Activated CD4-positive, alpha-beta memory T cell treated with anti-CD3 and anti-CD28 coated beads for 36 hours (primary cell): ENCODE measurements at regions of chr2 and their contacts with region 1.

Region 1: GRCh38 chr2:63588385-63589147 is at the starts of genes MDH1 and WDPCP:
- DNase-seq: peak; percentile 97
- H3K4me3 Mint-ChIP-seq: peak within 1 kb of the TSS; percentile 99
- H3K27ac Mint-ChIP-seq: peak within 1 kb of the TSS; percentile 92
- H3K4me1 Mint-ChIP-seq: peaks cover 35% of the 10 kb centered on the region
- H3K27me3 Mint-ChIP-seq: no peaks in the 10 kb centered on the region
- total RNA-seq, gene MDH1: 261 to 268 TPM
- total RNA-seq, gene WDPCP: 4.4 to 5.0 TPM

Region 2: GRCh38 chr2:62195421-62196277 is 1392.9 kb before region 1 on chr2 and contains the start of gene B3GNT2:
- CTCF ChIA-PET with region 1: no interaction called
- POLR2A ChIA-PET with region 1: no interaction called
- intact Hi-C with region 1: loop called (anchors 2 kb)
- DNase-seq: peak; percentile 89
- H3K4me3 Mint-ChIP-seq: peak within 1 kb of the TSS; percentile 88
- H3K27ac Mint-ChIP-seq: peak within 1 kb of the TSS; percentile 96
- H3K4me1 Mint-ChIP-seq: peaks cover 28% of the 10 kb centered on the region
- H3K27me3 Mint-ChIP-seq: no peaks in the 10 kb centered on the region
- total RNA-seq, gene B3GNT2: 26.6 to 26.9 TPM

Region 3: GRCh38 chr2:63050334-63051041 is 538.1 kb before region 1 on chr2 and contains the start of gene OTX1:
- CTCF ChIA-PET with region 1: no interaction called
- POLR2A ChIA-PET with region 1: no interaction called
- intact Hi-C with region 1: loop called (anchors 2 kb)
- DNase-seq: peak; percentile 67
- H3K4me3 Mint-ChIP-seq: peak within 1 kb of the TSS; percentile 77
- H3K27ac Mint-ChIP-seq: peak within 1 kb of the TSS; percentile 62
- H3K4me1 Mint-ChIP-seq: peaks cover 65% of the 10 kb centered on the region
- H3K27me3 Mint-ChIP-seq: peaks cover 80% of the 10 kb centered on the region
- total RNA-seq, gene OTX1: not detected

Region 4: DNA sequence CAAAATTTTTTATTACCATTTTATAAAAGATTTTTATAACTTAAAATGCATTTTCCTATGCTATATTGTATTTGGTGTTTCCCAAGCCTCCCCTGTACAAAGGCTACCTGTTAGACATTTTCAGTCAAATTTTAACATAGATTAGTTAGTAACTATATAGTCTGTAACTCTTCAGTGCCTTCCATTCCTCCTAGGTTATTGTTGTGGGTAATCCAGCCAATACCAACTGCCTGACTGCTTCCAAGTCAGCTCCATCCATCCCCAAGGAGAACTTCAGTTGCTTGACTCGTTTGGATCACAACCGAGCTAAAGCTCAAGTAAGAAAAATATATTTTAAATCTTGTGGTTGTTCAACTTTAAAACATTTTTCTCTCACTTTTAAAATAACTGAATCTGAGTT is 10.4 kb after region 1 on chr2:
- CTCF ChIA-PET with region 1: no interaction called
- POLR2A ChIA-PET with region 1: no interaction called
- intact Hi-C with region 1: no loop called
- DNase-seq: no peak
- H3K4me3 Mint-ChIP-seq: no peak overlapping the region
- H3K27ac Mint-ChIP-seq: no peak overlapping the region
- H3K4me1 Mint-ChIP-seq: peaks cover 5% of the 10 kb centered on the region
- H3K27me3 Mint-ChIP-seq: no peaks in the 10 kb centered on the region

Region 5: DNA sequence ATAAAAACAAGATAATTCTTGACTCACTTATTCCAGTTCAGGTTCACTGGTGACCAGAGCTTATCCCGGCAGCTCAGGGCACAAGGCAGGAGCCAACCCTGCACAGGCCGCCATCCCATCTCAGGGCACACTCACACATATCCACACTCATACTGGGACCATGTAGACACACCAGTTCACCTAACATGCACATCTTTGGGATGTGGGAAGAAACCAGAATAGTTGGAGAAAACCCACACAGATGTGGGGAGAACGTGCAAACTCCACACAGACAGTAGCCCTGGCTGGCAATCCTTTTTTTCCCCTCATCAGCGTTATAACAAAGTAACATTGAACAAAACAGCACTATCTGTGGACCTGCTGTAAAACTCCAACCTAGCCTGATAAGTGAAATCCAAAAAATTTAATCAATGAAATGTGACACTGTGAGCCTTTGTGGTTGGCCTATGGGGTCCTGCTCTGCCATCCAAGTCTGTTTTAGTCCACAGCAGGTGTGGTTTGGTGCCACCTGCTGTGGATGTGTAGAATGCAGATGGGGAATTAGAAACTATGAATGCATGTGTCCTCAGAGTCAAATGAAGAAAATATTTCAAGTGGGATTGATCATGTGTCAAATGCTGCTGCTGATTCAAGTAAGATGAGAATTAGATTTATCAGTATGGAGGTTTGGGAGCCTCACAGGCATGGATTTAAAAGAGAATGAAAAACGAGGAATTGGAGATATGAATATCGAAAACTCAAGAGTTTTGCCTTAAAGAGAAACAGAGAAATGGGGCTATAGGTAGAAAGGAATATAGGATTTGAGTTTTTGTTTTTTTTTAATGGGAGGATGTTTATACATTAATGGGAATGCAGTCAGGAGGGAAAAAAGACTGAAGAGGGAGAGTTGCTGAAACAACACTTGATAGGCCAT is 300.2 kb after region 1 on chr2:
- CTCF ChIA-PET with region 1: no interaction called
- POLR2A ChIA-PET with region 1: no interaction called
- intact Hi-C with region 1: loop called (anchors 2 kb)
- DNase-seq: peak; percentile 63
- H3K4me3 Mint-ChIP-seq: no peak overlapping the region
- H3K27ac Mint-ChIP-seq: peak overlapping the region; percentile 70
- H3K4me1 Mint-ChIP-seq: peaks cover 5% of the 10 kb centered on the region
- H3K27me3 Mint-ChIP-seq: no peaks in the 10 kb centered on the region

Region 6: GRCh38 chr2:64144057-64145013 is 555.8 kb after region 1 on chr2 and contains the start of gene PELI1:
- CTCF ChIA-PET with region 1: no interaction called
- POLR2A ChIA-PET with region 1: interaction called, 4 read pairs
- intact Hi-C with region 1: loop called (anchors 2 kb)
- DNase-seq: peak; percentile 97
- H3K4me3 Mint-ChIP-seq: peak within 1 kb of the TSS; percentile 96
- H3K27ac Mint-ChIP-seq: peak within 1 kb of the TSS; percentile 97
- H3K4me1 Mint-ChIP-seq: peaks cover 24% of the 10 kb centered on the region
- H3K27me3 Mint-ChIP-seq: no peaks in the 10 kb centered on the region
- total RNA-seq, gene PELI1: 38.4 to 42.9 TPM

Region 7: DNA sequence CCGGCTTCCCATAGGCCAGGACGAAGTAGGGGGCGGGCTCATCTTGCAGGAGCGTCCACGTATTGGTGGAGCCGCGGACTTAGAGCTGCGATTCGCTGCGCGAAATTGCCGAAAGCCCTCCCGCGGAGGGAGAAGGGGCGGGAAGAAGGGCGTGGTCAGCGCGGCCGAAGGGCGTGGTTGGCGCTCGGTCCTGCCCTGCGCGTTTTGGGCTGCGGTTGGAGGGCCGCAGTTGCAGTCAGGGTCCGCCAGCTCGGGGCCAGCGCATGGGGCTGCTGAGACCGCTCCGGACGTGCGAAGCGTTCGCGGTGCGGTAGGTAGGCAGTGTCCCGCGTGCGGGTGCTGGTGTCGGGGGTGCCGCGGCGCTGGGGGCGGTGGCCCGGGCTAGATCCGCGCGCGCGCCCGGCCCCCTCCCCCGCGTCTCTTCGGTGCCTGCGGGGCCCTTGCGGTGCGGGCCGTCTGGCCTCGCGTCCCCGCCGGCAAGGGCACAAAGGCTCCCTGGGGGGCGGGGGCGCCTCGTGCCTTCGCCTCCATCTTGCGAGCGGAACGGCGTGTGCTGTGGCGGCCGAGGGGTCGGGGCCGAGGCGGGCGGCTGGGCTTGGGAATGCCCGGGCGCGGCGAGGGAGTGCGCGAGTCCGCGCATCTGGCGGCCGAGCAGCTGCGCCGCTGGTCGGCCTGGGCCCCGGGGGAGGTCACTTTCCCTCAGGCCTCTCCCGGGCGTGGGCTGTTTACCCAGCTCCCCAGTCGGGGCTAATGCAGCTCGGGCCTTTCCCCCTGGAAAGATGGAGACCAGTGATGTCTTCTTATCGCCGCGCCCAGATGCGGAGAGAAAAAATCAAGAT is 1467.9 kb after region 1 on chr2 and contains the start of gene CEP68:
- CTCF ChIA-PET with region 1: no interaction called
- POLR2A ChIA-PET with region 1: no interaction called
- intact Hi-C with region 1: loop called (anchors 5 kb)
- DNase-seq: peak; percentile 98
- H3K4me3 Mint-ChIP-seq: peak within 1 kb of the TSS; percentile 94
- H3K27ac Mint-ChIP-seq: peak within 1 kb of the TSS; percentile 78
- H3K4me1 Mint-ChIP-seq: peaks cover 50% of the 10 kb centered on the region
- H3K27me3 Mint-ChIP-seq: no peaks in the 10 kb centered on the region
- total RNA-seq, gene CEP68: 6.6 to 8.0 TPM